Activated B cell treated with CpG ODN at 0.5 μM for 24 hours (primary cell): ENCODE measurements at regions of chr19 and their contacts with region 1.

Region 1: DNA sequence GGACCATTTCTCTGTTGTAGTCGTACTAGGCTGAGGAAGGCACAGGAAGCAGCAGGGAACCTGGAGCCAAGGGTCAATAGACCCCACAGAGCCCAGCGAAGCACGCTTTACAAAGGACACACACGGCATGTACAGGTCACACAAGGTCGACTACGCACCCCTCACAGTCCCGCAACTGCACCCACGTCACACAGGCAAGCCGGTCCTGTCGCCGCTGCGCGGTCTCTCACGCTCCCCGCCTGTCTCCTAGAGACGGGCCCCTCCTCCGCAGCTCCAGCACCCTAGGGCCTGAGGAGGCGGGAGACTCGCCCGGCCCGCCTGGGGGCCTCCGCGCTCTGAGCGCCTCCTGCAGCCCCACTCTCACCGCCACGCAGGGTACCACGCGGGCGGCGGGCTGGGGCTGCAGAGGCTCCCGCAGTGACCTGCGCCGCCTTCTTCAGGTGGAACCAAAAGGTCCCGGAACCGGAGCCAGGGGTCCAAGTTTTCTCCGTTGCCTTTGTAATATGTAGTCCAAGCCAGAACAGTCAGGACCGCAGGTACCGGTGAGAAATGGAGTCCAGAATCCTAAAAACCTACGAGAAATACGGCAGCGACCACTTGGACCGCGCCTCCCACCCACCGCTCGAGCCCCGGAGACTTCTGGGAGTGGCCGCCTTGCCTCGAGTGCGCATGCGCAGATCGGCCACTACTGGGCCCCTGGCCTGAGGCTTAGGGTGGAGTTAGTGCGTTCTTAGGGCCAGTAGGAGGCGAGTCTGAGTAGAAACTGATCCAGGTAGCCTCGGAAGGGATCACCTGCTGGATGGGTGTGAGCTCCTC is at the start of gene ZNF607:
- DNase-seq: peak; percentile 84
- ATAC-seq: peak; percentile 94
- H3K4me3 Mint-ChIP-seq: peak within 1 kb of the TSS; percentile 94
- H3K27ac Mint-ChIP-seq: peak within 1 kb of the TSS; percentile 91
- H3K4me1 Mint-ChIP-seq: peaks cover 17% of the 10 kb centered on the region
- H3K27me3 Mint-ChIP-seq: no peaks in the 10 kb centered on the region
- CTCF ChIP-seq: no peak
- total RNA-seq, gene ZNF607: 9.6 and 10.3 TPM in 2 replicates

Region 2: GRCh38 chr19:37655689-37656371 is 63.5 kb before region 1 on chr19:
- CTCF ChIA-PET with region 1: interaction called, 3 read pairs
- POLR2A ChIA-PET with region 1: no interaction called
- intact Hi-C with region 1: loop called (anchors 2 kb)
- DNase-seq: peak; percentile 80
- ATAC-seq: peak; percentile 67
- H3K4me3 Mint-ChIP-seq: peak overlapping the region; percentile 95
- H3K27ac Mint-ChIP-seq: peak overlapping the region; percentile 95
- H3K4me1 Mint-ChIP-seq: peaks cover 28% of the 10 kb centered on the region
- H3K27me3 Mint-ChIP-seq: no peaks in the 10 kb centered on the region
- CTCF ChIP-seq: no peak

Region 3: GRCh38 chr19:37691881-37692504 is 27.3 kb before region 1 on chr19:
- CTCF ChIA-PET with region 1: no interaction called
- POLR2A ChIA-PET with region 1: interaction called, 3 read pairs
- intact Hi-C with region 1: loop called (anchors 2 kb)
- DNase-seq: peak; percentile 69
- ATAC-seq: peak; percentile 94
- H3K4me3 Mint-ChIP-seq: peak overlapping the region; percentile 94
- H3K27ac Mint-ChIP-seq: peak overlapping the region; percentile 86
- H3K4me1 Mint-ChIP-seq: peaks cover 10% of the 10 kb centered on the region
- H3K27me3 Mint-ChIP-seq: no peaks in the 10 kb centered on the region
- CTCF ChIP-seq: no peak

Region 4: GRCh38 chr19:37779127-37780005 is 60.0 kb after region 1 on chr19 and contains the start of gene ZNF573:
- CTCF ChIA-PET with region 1: no interaction called
- POLR2A ChIA-PET with region 1: interaction called, 8 read pairs
- intact Hi-C with region 1: loop called (anchors 1 kb)
- DNase-seq: peak; percentile 70
- ATAC-seq: peak; percentile 86
- H3K4me3 Mint-ChIP-seq: peak within 1 kb of the TSS; percentile 91
- H3K27ac Mint-ChIP-seq: peak within 1 kb of the TSS; percentile 96
- H3K4me1 Mint-ChIP-seq: peaks cover 31% of the 10 kb centered on the region
- H3K27me3 Mint-ChIP-seq: no peaks in the 10 kb centered on the region
- CTCF ChIP-seq: no peak
- total RNA-seq, gene ZNF573: 18.7 and 19.8 TPM in 2 replicates

Region 5: GRCh38 chr19:37817180-37817981 is 98.1 kb after region 1 on chr19:
- CTCF ChIA-PET with region 1: no interaction called
- POLR2A ChIA-PET with region 1: no interaction called
- intact Hi-C with region 1: no loop called
- DNase-seq: peak; percentile 31
- ATAC-seq: peak; percentile 47
- H3K4me3 Mint-ChIP-seq: peak overlapping the region; percentile 73
- H3K27ac Mint-ChIP-seq: no peak overlapping the region
- H3K4me1 Mint-ChIP-seq: peaks cover 9% of the 10 kb centered on the region
- H3K27me3 Mint-ChIP-seq: peaks cover 24% of the 10 kb centered on the region
- CTCF ChIP-seq: no peak

Region 6: DNA sequence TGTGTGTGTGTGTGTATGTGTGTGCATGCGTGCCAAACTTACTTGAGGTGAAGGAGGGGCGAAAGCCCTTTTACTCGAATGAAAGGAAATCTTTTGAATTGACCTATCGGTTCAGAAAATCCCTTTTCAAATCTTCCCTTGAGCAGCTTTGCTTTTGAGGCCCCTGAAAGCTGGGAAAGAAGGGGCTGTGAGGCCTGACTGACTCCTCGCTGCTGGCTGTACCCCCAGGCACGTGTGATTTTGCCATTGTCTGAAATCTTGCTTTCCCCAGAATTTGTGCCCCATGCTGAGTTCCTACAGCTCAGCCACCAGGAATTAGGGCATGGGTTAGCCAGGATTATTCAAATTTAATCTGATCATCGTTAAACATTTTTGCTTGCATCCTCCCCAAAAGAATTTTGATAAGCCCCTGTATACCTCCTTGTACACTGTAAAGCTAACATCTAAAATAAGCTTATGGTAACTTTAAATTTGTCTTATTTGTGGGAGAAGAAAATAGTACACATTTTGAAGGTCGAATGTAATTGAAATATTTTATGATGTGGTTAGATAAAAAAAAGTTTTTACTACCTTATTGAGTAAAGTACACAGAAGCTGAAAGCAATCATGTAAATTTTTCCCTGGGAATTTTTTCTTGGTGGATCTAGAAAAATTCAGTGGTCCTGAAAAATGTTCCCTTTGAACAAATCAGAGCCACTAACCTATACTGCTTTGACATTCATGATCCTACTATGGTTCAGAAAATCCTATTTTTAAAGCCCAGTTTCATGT is 234.4 kb after region 1 on chr19:
- CTCF ChIA-PET with region 1: no interaction called
- POLR2A ChIA-PET with region 1: no interaction called
- intact Hi-C with region 1: no loop called
- DNase-seq: no peak
- ATAC-seq: no peak
- H3K4me3 Mint-ChIP-seq: peak overlapping the region; percentile 11
- H3K27ac Mint-ChIP-seq: peak overlapping the region; percentile 84
- H3K4me1 Mint-ChIP-seq: peaks cover 88% of the 10 kb centered on the region
- H3K27me3 Mint-ChIP-seq: no peaks in the 10 kb centered on the region
- CTCF ChIP-seq: no peak

Region 7: GRCh38 chr19:38079926-38080380 is 360.6 kb after region 1 on chr19:
- CTCF ChIA-PET with region 1: no interaction called
- POLR2A ChIA-PET with region 1: no interaction called
- intact Hi-C with region 1: loop called (anchors 10 kb)
- DNase-seq: no peak
- ATAC-seq: peak; percentile 83
- H3K4me3 Mint-ChIP-seq: peak overlapping the region; percentile 28
- H3K27ac Mint-ChIP-seq: peak overlapping the region; percentile 87
- H3K4me1 Mint-ChIP-seq: peaks cover 22% of the 10 kb centered on the region
- H3K27me3 Mint-ChIP-seq: no peaks in the 10 kb centered on the region
- CTCF ChIP-seq: no peak